Activated naive CD8-positive, alpha-beta T cell treated with anti-CD3 and anti-CD28 coated beads, Interleukin-2, amount 10 ng/mL, durations not matched to agents 7 days and 5 days (primary cell): ENCODE measurements at regions of chr1 and their contacts with region 1.

Region 1: GRCh38 chr1:167635156-167635648 is 5.2 kb downstream of the RCSD1 start:
- DNase-seq: no peak
- ATAC-seq: no peak
- H3K4me3 Mint-ChIP-seq: no peak overlapping the region
- H3K27ac Mint-ChIP-seq: no peak overlapping the region
- H3K4me1 Mint-ChIP-seq: peaks cover 57% of the 10 kb centered on the region
- H3K27me3 Mint-ChIP-seq: no peaks in the 10 kb centered on the region

Region 2: GRCh38 chr1:167599957-167600581 is 35.1 kb before region 1 on chr1:
- POLR2A ChIA-PET with region 1: interaction called, 79 read pairs
- DNase-seq: peak; percentile 46
- ATAC-seq: peak; percentile 79
- H3K4me3 Mint-ChIP-seq: peak overlapping the region; percentile 76
- H3K27ac Mint-ChIP-seq: peak overlapping the region; percentile 82
- H3K4me1 Mint-ChIP-seq: peaks cover 37% of the 10 kb centered on the region
- H3K27me3 Mint-ChIP-seq: no peaks in the 10 kb centered on the region

Region 3: GRCh38 chr1:167650269-167651160 is 15.3 kb after region 1 on chr1:
- POLR2A ChIA-PET with region 1: interaction called, 21 read pairs
- DNase-seq: peak; percentile 44
- ATAC-seq: peak; percentile 70
- H3K4me3 Mint-ChIP-seq: peak overlapping the region; percentile 58
- H3K27ac Mint-ChIP-seq: peak overlapping the region; percentile 75
- H3K4me1 Mint-ChIP-seq: peaks cover 66% of the 10 kb centered on the region
- H3K27me3 Mint-ChIP-seq: no peaks in the 10 kb centered on the region